ENCODE measurements at regions of chr10 and their contacts with region 1.

Region 1: DNA sequence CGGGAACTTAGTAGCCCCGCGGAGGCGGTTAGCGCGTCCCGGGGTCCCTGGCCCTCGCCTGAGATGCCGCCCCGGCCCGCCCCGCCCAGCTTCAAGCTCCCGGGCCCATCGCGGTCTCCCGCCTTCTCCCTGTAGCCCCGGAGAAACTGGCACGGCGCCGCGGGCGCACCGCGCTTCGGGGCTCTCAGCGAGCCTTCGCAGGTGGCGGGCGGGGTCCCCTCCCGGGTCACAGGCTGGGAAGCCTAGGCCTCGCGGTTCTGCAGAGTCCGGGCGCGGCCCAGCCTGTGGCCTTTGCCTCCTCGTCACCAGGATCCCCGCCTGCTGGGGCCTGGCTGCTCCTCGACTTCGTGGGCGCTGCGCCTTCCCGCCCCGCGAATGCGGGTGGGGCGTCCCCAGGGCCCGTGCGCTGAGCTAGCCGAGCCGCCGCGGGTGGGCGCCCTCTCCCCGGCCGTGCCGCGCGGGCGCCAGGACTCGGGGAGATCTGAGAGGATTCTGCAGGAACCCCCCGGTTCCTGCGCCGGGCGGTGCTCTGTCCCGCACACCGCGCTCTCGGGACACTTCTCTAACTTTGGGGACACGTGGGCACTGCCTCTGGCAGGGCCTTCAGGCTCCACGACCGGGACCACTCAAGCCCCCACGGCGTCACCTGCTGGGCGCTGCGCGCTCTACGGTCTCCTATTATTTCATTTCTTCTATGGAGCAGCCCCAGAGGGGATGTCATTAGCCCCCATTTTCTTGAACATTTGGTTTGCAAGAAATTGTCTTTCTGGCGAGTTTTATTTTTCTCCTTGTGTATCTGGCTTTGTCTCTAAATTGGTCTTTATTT is 682 bp upstream of the RGS10 start:
- DNase-seq: no peak
- ATAC-seq: peak; percentile 49
- H3K4me3 ChIP-seq: peak overlapping the region; percentile 84
- H3K27ac ChIP-seq: peak overlapping the region; percentile 59
- H3K4me1 ChIP-seq: peaks cover 18% of the 10 kb centered on the region
- H3K27me3 ChIP-seq: no peaks in the 10 kb centered on the region
- CTCF ChIP-seq: peak; percentile 48 to 70 (median 66)
- EP300 ChIP-seq: no peak
- POLR2A ChIP-seq: no peak
- RAD21 ChIP-seq: peak; percentile 50

Region 2: DNA sequence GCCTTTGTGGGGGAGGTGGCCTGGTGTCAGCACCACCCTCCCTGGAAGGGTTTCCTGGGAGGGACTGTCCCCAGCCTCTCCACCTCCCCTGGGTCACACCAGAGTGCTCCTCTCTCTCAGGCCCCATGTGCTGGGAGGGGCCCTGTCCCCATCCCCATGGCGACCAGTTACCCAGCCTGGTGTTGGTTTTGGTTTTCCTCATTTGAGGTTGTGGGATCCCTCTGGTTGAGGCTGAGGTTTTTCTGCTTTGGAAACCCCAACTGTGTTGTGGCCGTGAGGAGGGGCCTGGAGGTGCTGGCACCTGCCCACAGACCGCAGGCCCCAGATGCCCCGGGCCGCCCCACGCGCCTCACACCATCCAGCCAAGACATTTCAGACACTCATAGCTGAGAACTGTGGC is 229.6 kb before region 1 on chr10:
- CTCF ChIA-PET with region 1: interaction called, 4 read pairs
- POLR2A ChIA-PET with region 1: interaction called, 4 read pairs
- RAD21 ChIA-PET with region 1: no interaction called
- SMC1A ChIA-PET with region 1: no interaction called
- in situ Hi-C with region 1: no loop called
- intact Hi-C with region 1: loop called (anchors 5 kb)
- DNase-seq: peak; percentile 78
- ATAC-seq: peak; percentile 81
- H3K4me3 ChIP-seq: no peak overlapping the region
- H3K27ac ChIP-seq: no peak overlapping the region
- H3K4me1 ChIP-seq: peaks cover 69% of the 10 kb centered on the region
- H3K27me3 ChIP-seq: no peaks in the 10 kb centered on the region
- CTCF ChIP-seq: no peak
- EP300 ChIP-seq: peak; percentile 38 to 54; a peak in 1 of 4 replicates
- POLR2A ChIP-seq: no peak
- RAD21 ChIP-seq: no peak

Region 3: DNA sequence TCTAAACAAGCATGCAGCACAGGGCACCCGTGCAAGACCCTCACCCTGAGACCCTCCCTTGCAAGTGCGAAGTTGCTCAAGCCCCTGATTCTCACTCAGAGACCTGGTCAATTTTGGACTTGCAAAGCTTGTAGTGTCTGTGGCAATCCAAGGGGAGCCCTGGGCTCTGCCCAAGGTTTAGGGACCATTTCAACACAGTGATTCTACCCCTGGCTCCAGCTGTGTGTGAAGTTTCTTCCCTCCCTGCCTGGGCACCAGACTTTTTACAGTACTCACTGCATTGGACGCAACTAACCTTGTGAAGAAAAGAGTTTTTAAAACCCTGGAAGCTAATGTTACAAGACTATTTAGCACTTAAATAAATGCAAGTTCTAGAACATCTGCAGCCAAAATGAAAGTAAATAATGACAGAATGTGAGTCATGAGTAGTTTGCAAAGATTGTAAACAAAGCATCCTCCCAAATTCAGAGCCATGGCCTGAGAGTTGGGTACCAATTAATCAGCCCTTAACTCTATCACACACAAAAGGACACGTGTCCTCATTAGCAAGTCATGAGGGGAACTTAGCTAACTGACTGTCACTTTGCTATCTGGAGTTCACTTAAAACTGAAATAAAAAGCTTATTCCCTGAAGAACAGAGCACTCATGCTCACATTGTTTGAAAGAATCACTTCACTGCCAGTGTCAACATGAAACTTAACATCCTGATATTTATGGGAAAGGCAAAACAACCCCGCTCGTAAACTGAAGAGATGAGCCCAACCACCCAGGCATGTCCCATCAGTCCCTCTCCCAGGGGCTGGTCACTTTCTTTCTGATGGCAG is 48.8 kb before region 1 on chr10:
- CTCF ChIA-PET with region 1: interaction called, 16 read pairs
- POLR2A ChIA-PET with region 1: interaction called, 4 read pairs
- RAD21 ChIA-PET with region 1: interaction called, 12 read pairs
- SMC1A ChIA-PET with region 1: interaction called, 14 read pairs
- in situ Hi-C with region 1: no loop called
- intact Hi-C with region 1: no loop called
- DNase-seq: no peak
- ATAC-seq: no peak
- H3K4me3 ChIP-seq: no peak overlapping the region
- H3K27ac ChIP-seq: no peak overlapping the region
- H3K4me1 ChIP-seq: peaks cover 15% of the 10 kb centered on the region
- H3K27me3 ChIP-seq: no peaks in the 10 kb centered on the region
- CTCF ChIP-seq: no peak
- EP300 ChIP-seq: no peak
- POLR2A ChIP-seq: no peak
- RAD21 ChIP-seq: no peak

Region 4: GRCh38 chr10:119517235-119518141 is 25.7 kb before region 1 on chr10:
- CTCF ChIA-PET with region 1: interaction called, 45 read pairs
- POLR2A ChIA-PET with region 1: interaction called, 24 read pairs
- RAD21 ChIA-PET with region 1: interaction called, 55 read pairs
- SMC1A ChIA-PET with region 1: interaction called, 62 read pairs
- in situ Hi-C with region 1: no loop called
- intact Hi-C with region 1: loop called (anchors 1 kb)
- DNase-seq: peak; percentile 59
- ATAC-seq: peak; percentile 77
- H3K4me3 ChIP-seq: peak overlapping the region; percentile 39; the same call in 1 of the 2 replicates
- H3K27ac ChIP-seq: peak overlapping the region; percentile 100
- H3K4me1 ChIP-seq: peaks cover 43% of the 10 kb centered on the region
- H3K27me3 ChIP-seq: no peaks in the 10 kb centered on the region
- CTCF ChIP-seq: no peak
- EP300 ChIP-seq: 0 out of 4 replicates have a peak, but pooled peaks of 1 of the 2 experiments have one; percentile 5
- POLR2A ChIP-seq: no peak; the same call in none of the 2 replicates
- RAD21 ChIP-seq: no peak

Region 5: GRCh38 chr10:119555178-119555784 is 12.1 kb after region 1 on chr10:
- CTCF ChIA-PET with region 1: interaction called, 10 read pairs
- POLR2A ChIA-PET with region 1: interaction called, 3 read pairs
- RAD21 ChIA-PET with region 1: no interaction called
- SMC1A ChIA-PET with region 1: no interaction called
- in situ Hi-C with region 1: no loop called
- intact Hi-C with region 1: no loop called
- DNase-seq: no peak
- ATAC-seq: no peak
- H3K4me3 ChIP-seq: no peak overlapping the region
- H3K27ac ChIP-seq: no peak overlapping the region
- H3K4me1 ChIP-seq: no peaks in the 10 kb centered on the region
- H3K27me3 ChIP-seq: no peaks in the 10 kb centered on the region
- CTCF ChIP-seq: no peak
- EP300 ChIP-seq: no peak
- POLR2A ChIP-seq: no peak
- RAD21 ChIP-seq: no peak

Region 6: DNA sequence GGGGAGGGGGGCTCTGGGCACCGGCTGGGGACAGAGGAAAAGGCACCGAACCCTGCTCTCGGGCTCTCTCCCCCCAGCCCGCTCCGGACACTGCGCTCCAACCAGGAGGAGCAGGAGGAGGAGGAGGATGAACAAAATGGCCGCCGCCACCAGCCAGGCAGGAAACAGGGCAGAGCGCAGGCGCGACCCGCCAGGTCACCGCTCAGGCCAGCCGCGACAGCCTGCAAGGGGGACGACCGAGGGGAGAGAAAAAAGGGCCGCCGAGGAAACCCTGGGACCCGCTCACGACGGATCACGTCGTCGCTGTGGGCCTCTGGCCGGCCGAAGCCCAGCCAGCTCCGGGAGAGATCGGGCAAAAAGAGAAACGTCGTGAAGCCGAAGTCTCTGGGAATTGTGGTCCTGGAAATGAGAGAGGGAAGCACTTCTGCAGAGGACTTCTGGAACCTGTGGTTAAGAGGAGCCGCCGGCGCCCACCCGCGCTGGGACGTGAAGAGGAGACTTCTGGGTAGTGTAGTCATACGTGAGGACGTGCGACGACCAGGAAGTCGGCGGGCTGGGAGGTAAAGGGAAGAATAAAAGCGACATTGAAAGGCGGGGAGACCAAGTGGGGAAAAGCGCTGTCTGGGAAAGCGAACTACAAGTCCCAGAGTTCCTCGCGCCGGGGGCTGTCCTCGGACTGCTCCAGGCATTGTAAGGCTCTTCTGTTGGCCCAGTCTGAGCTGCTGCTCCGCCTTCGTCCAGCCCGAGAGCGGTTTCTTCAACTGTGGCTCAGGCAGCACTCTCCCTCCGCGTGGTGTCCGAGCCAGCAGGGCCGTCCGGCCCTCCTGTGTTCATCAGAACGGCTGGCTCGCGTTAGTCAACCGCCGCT is 53.6 kb after region 1 on chr10 and contains the start of gene TIAL1:
- CTCF ChIA-PET with region 1: interaction called, 13 read pairs
- POLR2A ChIA-PET with region 1: interaction called, 8 read pairs
- RAD21 ChIA-PET with region 1: interaction called, 7 read pairs
- SMC1A ChIA-PET with region 1: interaction called, 10 read pairs
- in situ Hi-C with region 1: no loop called
- intact Hi-C with region 1: loop called (anchors 2 kb)
- DNase-seq: peak; percentile 98
- ATAC-seq: peak; percentile 86
- H3K4me3 ChIP-seq: peak within 1 kb of the TSS; percentile 83
- H3K27ac ChIP-seq: peak within 1 kb of the TSS; percentile 97
- H3K4me1 ChIP-seq: peaks cover 7% of the 10 kb centered on the region; the same call in 1 of the 2 replicates
- H3K27me3 ChIP-seq: no peaks in the 10 kb centered on the region
- CTCF ChIP-seq: no peak
- EP300 ChIP-seq: no peak
- POLR2A ChIP-seq: peak; percentile 81
- RAD21 ChIP-seq: no peak
- polyA plus RNA-seq, gene TIAL1: 26.0 to 68.2 TPM

Region 7: DNA sequence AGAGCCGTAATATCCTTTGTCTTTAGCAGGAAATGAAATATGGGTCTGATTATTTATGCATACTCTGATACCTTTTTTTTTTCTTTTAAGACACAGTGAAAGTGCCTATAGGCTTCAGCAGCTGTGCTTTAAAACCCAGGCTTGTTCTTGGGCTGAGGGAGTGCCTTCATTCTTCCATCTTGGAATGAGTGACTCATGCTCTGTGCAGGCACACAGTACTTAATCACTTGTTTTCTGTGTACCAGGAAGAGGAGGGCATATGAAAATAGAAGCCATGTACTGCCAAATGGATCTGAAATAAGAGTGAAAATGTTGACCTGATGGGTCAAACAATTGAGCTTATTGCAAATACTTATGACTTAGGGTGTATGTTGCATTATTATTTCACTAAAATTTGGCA is 194.6 kb after region 1 on chr10:
- CTCF ChIA-PET with region 1: no interaction called
- POLR2A ChIA-PET with region 1: no interaction called
- RAD21 ChIA-PET with region 1: no interaction called
- SMC1A ChIA-PET with region 1: no interaction called
- in situ Hi-C with region 1: no loop called
- intact Hi-C with region 1: no loop called
- DNase-seq: no peak
- ATAC-seq: peak; percentile 39
- H3K4me3 ChIP-seq: no peak overlapping the region
- H3K27ac ChIP-seq: no peak overlapping the region
- H3K4me1 ChIP-seq: no peaks in the 10 kb centered on the region
- H3K27me3 ChIP-seq: no peaks in the 10 kb centered on the region
- CTCF ChIP-seq: no peak
- EP300 ChIP-seq: no peak
- POLR2A ChIP-seq: no peak
- RAD21 ChIP-seq: no peak